CD8-positive, alpha-beta memory T cell (primary cell): ENCODE measurements at regions of chr6 and their contacts with region 1.

Region 1: DNA sequence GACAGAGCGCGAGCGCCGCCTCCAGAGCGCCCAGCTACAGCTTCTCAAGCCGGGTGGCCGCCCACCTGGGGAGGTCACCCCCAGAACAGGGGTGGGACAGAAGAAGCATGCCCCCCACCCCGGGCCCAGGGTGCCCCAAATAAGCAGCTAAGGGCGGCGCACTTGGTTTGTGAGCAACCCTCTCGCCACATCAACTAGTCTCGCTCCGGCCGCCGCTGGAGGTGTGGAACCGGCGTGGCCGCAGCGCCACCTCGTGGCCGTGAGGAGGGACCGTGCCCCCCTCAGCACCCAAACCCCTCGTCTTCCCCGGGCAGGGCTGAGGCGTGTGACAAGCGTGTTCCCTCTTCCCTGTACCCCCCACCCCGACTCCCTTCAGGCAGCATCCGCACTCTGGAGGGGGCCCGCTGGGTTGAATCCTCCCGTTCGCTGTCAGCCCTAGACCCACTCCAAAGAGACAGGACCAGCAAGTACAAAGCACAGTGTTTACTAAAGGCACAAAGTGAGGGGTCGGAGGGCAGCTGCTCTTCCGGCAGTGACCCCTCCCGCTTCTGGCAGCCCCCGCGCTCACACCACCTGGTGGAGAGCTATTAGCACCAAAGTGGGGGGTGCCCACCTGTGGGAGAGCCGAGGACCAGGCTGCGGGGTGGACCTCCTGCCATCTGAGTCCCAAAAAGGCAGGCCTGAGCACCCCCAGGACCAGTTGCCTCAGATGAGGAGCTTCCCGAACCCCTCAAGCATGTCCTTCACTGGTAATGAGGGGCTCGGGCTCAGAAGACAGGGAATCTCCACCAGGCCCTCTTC is 45.4 kb downstream of the MDFI start:
- DNase-seq: peak; percentile 58 to 81 (median 69)
- H3K4me3 ChIP-seq: peak overlapping the region; percentile 34
- H3K4me3 Mint-ChIP-seq: peak overlapping the region in 6 of 7 donors; percentile 32 to 74 (median 50)
- H3K27ac ChIP-seq: no peak overlapping the region
- H3K27ac Mint-ChIP-seq: peak overlapping the region in 3 of 8 donors; percentile 24 to 37 (median 24)
- H3K4me1 ChIP-seq: peaks cover 5% of the 10 kb centered on the region
- H3K4me1 Mint-ChIP-seq: peaks cover 4 to 16% (median 5%) of the 10 kb centered on the region in 3 donors
- H3K27me3 ChIP-seq: no peaks in the 10 kb centered on the region
- H3K27me3 Mint-ChIP-seq: peaks cover 6 to 11% of the 10 kb centered on the region in 2 donors

Region 2: DNA sequence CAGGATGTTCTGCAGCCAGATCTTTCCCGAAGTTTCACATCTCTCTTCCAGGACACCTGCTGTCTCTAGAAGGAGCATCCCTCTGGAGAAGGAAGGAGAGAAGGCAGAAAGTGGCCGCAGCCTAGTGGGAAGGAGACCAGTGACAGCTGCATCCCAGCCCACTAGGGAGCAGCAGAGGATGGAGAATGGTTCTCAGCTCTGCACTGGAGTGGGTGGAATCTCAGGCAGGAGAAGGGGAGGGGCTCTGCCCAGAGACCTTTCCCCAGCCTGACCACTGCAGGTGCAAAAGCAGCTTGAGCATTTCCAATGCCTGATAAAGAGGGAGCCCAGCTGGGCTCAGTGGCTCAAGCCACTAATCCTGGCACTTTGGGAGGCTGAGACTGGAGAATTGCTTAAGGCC is 316.0 kb before region 1 on chr6:
- CTCF ChIA-PET with region 1: interaction called, 13 read pairs
- POLR2A ChIA-PET with region 1: no interaction called
- DNase-seq: no peak
- H3K4me3 ChIP-seq: no peak overlapping the region
- H3K4me3 Mint-ChIP-seq: no peak overlapping the region
- H3K27ac ChIP-seq: no peak overlapping the region
- H3K27ac Mint-ChIP-seq: no peak overlapping the region
- H3K4me1 ChIP-seq: no peaks in the 10 kb centered on the region
- H3K4me1 Mint-ChIP-seq: peaks cover 18 to 27% (median 21%) of the 10 kb centered on the region in 3 donors
- H3K27me3 ChIP-seq: peaks cover 17% of the 10 kb centered on the region
- H3K27me3 Mint-ChIP-seq: peaks cover 53 to 57% of the 10 kb centered on the region in 2 donors

Region 3: GRCh38 chr6:41424370-41425058 is 259.2 kb before region 1 on chr6:
- CTCF ChIA-PET with region 1: interaction called, 10 read pairs
- POLR2A ChIA-PET with region 1: no interaction called
- DNase-seq: peak; percentile 57 to 81 (median 68)
- H3K4me3 ChIP-seq: no peak overlapping the region
- H3K4me3 Mint-ChIP-seq: no peak overlapping the region
- H3K27ac ChIP-seq: no peak overlapping the region
- H3K27ac Mint-ChIP-seq: no peak overlapping the region
- H3K4me1 ChIP-seq: peaks cover 21% of the 10 kb centered on the region
- H3K4me1 Mint-ChIP-seq: peaks cover 6 to 9% (median 6%) of the 10 kb centered on the region in 3 donors
- H3K27me3 ChIP-seq: peaks cover 11% of the 10 kb centered on the region
- H3K27me3 Mint-ChIP-seq: peaks cover 24 to 31% of the 10 kb centered on the region in 2 donors

Region 4: DNA sequence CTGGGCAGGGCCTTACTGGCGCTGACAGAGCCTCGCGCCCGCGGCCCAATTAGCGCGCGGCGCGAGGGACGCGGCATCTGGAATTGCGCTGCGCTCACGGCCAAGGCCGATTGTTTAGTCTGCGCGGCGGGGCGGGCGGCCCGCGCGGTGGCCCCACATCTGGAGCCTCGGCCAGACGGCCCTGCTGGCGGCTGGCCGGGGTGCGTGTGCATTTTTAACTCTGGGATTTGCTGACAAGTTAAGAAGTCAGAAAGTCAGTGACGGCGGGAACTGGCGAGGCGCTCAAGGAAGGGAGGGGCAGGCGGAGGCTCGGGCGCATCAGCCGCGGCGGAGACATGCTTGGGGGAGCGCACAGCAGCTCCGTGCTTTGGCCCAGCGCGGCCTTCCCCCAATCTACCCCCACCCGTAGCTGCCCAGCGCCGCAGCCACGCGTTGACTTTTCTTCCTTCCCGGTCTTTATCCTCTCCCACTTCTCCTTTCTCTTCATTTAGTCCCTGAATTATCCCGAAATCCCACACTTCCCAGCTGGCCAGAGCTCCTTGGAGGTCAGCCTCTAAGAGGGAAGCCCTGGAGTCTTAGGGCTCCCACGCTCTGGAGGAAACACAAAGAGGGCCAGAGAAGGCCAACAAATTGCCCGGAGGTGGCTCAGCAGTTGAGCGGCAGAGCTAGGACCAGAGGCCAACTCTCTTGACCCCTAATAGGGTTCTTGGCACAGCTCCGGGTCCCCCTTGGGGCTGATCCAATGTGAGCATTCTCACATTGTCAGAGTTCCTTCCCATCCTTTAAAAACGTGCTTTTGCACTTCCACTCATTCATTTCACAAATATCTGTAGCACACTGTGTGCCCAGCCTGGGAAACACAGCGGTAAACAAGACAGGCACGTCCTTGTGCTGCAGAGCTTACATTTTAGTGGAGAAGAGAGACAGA is 178.3 kb before region 1 on chr6:
- CTCF ChIA-PET with region 1: no interaction called
- POLR2A ChIA-PET with region 1: no interaction called
- DNase-seq: peak in 1 of 5 donors; percentile 33
- H3K4me3 ChIP-seq: no peak overlapping the region
- H3K4me3 Mint-ChIP-seq: peak overlapping the region in 6 of 7 donors; percentile 22 to 85 (median 50)
- H3K27ac ChIP-seq: no peak overlapping the region
- H3K27ac Mint-ChIP-seq: peak overlapping the region in 2 of 8 donors; percentile 0 to 92
- H3K4me1 ChIP-seq: peaks cover 4% of the 10 kb centered on the region
- H3K4me1 Mint-ChIP-seq: peaks cover 21 to 26% (median 22%) of the 10 kb centered on the region in 3 donors
- H3K27me3 ChIP-seq: peaks cover 19% of the 10 kb centered on the region
- H3K27me3 Mint-ChIP-seq: peaks cover 38 to 65% of the 10 kb centered on the region in 2 donors

Region 5: GRCh38 chr6:41602864-41603608 is 80.7 kb before region 1 on chr6:
- CTCF ChIA-PET with region 1: interaction called, 30 read pairs
- POLR2A ChIA-PET with region 1: no interaction called
- DNase-seq: peak; percentile 56 to 81 (median 63)
- H3K4me3 ChIP-seq: peak overlapping the region; percentile 19
- H3K4me3 Mint-ChIP-seq: peak overlapping the region in 1 of 7 donors; percentile 23
- H3K27ac ChIP-seq: no peak overlapping the region
- H3K27ac Mint-ChIP-seq: no peak overlapping the region
- H3K4me1 ChIP-seq: peaks cover 8% of the 10 kb centered on the region
- H3K4me1 Mint-ChIP-seq: peaks cover 5 to 11% (median 6%) of the 10 kb centered on the region in 3 donors
- H3K27me3 ChIP-seq: peaks cover 9% of the 10 kb centered on the region
- H3K27me3 Mint-ChIP-seq: peaks cover 0 to 14% of the 10 kb centered on the region in 2 donors

Region 6: DNA sequence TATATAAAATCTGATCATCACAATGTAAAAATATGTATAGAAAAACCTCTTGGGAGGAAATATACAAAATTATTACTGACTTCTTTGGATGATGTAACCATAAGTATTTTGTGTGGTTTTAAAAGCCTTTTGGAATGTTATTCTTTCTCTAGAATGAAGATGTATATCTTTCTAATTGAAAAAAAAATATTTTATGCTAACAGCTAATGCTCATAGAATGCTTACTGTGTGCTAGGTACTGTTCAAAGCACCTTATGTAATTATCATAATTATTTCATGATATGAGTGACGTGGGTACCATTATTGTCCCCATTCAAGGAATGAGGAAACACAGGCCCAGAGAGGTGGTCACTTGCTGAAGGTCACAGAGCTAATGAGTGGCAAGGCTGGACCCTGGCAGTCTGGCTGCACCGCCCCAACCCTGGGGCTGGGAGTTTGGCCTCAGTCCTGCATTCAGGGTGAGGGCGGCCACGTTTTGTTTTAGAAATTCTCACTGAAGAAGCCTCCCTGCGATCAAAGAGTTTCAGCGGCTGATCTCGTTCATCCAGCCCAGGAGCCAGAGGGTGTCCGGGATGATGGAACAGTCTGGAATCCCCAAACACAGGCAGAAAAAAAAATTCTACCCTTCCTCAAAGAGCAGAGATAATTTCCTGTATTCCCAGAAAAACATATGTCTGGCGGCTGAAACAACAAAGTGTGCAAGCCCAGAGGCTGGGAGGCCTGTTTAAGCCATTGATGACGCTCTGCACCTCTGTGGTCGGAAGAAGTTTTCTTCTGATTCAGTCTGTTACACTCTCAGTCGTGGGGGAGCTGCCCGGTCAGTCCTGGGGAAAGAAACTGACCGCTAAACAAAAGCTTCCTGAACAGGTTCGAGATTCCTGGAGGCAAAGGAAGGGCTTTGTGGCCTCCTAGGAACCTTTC is 14.4 kb after region 1 on chr6:
- CTCF ChIA-PET with region 1: interaction called, 20 read pairs
- POLR2A ChIA-PET with region 1: no interaction called
- DNase-seq: no peak
- H3K4me3 ChIP-seq: no peak overlapping the region
- H3K4me3 Mint-ChIP-seq: no peak overlapping the region
- H3K27ac ChIP-seq: no peak overlapping the region
- H3K27ac Mint-ChIP-seq: peak overlapping the region in 2 of 8 donors; percentile 22 to 63
- H3K4me1 ChIP-seq: no peaks in the 10 kb centered on the region
- H3K4me1 Mint-ChIP-seq: peaks cover 0 to 9% (median 5%) of the 10 kb centered on the region in 3 donors
- H3K27me3 ChIP-seq: no peaks in the 10 kb centered on the region
- H3K27me3 Mint-ChIP-seq: no peaks in the 10 kb centered on the region